CD14-positive monocyte (primary cell): ENCODE measurements at regions of chr20 and their contacts with region 1.

Region 1: GRCh38 chr20:2206957-2207769 is 88.6 kb upstream of the TGM3 start:
- DNase-seq: peak; percentile 78 to 86 (median 78)
- H3K4me3 ChIP-seq: peak overlapping the region; percentile 7 to 72 (median 48)
- H3K4me3 Mint-ChIP-seq: peak overlapping the region; percentile 74 to 84
- H3K27ac ChIP-seq: peak overlapping the region in 1 of 2 donors; percentile 37
- H3K27ac Mint-ChIP-seq: peak overlapping the region in 5 of 7 donors; percentile 67 to 78 (median 73)
- H3K4me1 ChIP-seq: peaks cover 35% of the 10 kb centered on the region in 2 donors
- H3K4me1 Mint-ChIP-seq: peaks cover 43% of the 10 kb centered on the region
- H3K27me3 ChIP-seq: peaks cover 16 to 42% of the 10 kb centered on the region in 2 donors
- H3K27me3 Mint-ChIP-seq: peaks cover 41 to 51% (median 41%) of the 10 kb centered on the region in 3 donors
- CTCF ChIP-seq: peak; percentile 95

Region 2: GRCh38 chr20:2255926-2256531 is 48.9 kb after region 1 on chr20:
- intact Hi-C with region 1: loop called (anchors 5 to 10 kb)
- DNase-seq: peak; percentile 33 to 78 (median 64)
- H3K4me3 ChIP-seq: peak overlapping the region in 1 of 3 experiments; percentile 55
- H3K4me3 Mint-ChIP-seq: peak overlapping the region in 1 of 2 donors; percentile 62
- H3K27ac ChIP-seq: peak overlapping the region; percentile 26 to 73
- H3K27ac Mint-ChIP-seq: peak overlapping the region; percentile 73 to 93 (median 85)
- H3K4me1 ChIP-seq: peaks cover 62 to 64% of the 10 kb centered on the region in 2 donors
- H3K4me1 Mint-ChIP-seq: peaks cover 58% of the 10 kb centered on the region
- H3K27me3 ChIP-seq: peaks cover 2 to 8% of the 10 kb centered on the region in 2 donors
- H3K27me3 Mint-ChIP-seq: peaks cover 8 to 14% (median 12%) of the 10 kb centered on the region in 3 donors
- CTCF ChIP-seq: no peak

Region 3: GRCh38 chr20:2349818-2350508 is 142.8 kb after region 1 on chr20:
- intact Hi-C with region 1: loop called (anchors 2 kb)
- DNase-seq: no peak
- H3K4me3 ChIP-seq: no peak overlapping the region
- H3K4me3 Mint-ChIP-seq: no peak overlapping the region
- H3K27ac ChIP-seq: no peak overlapping the region
- H3K27ac Mint-ChIP-seq: peak overlapping the region in 1 of 7 donors; percentile 30
- H3K4me1 ChIP-seq: peaks cover 0 to 9% of the 10 kb centered on the region in 2 donors
- H3K4me1 Mint-ChIP-seq: peaks cover 15% of the 10 kb centered on the region
- H3K27me3 ChIP-seq: peaks cover 8 to 21% of the 10 kb centered on the region in 2 donors
- H3K27me3 Mint-ChIP-seq: peaks cover 28 to 45% (median 40%) of the 10 kb centered on the region in 3 donors
- CTCF ChIP-seq: no peak

Region 4: DNA sequence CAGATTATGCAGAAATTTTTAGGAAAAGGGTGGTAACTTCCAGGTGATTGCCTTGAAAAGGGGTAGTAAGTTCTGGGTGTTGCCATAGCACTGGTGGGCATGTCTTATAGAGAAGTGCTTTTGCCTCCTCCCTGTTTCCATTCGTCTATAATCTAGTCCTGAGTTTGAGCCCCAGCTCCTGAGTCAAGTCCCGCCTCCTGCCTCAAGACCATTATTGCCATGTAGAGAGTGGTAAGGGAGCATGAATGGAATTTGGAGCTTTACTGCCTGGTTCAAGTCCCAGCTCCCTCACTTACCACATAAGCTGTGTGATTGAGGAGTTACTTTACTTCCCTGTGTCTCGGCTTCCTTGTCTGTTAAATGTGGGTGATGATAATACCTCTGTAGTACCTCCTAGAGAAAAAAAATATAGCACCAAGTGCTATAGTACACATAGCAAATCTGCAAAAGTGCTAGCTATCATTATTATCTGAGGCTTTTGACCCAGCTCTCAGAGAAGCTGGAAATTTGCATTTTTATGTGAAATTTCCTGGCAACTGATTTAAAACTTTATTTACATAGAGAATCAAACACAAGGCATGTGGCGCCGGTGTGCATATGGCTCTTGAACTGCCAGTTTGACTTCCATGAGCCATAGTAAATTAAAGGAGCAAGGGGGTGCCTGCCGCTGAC is 209.5 kb after region 1 on chr20:
- intact Hi-C with region 1: no loop called
- DNase-seq: no peak
- H3K4me3 ChIP-seq: no peak overlapping the region
- H3K4me3 Mint-ChIP-seq: no peak overlapping the region
- H3K27ac ChIP-seq: no peak overlapping the region
- H3K27ac Mint-ChIP-seq: no peak overlapping the region
- H3K4me1 ChIP-seq: no peaks in the 10 kb centered on the region
- H3K4me1 Mint-ChIP-seq: no peaks in the 10 kb centered on the region
- H3K27me3 ChIP-seq: peaks cover 5 to 21% of the 10 kb centered on the region in 2 donors
- H3K27me3 Mint-ChIP-seq: peaks cover 14 to 34% (median 22%) of the 10 kb centered on the region in 3 donors
- CTCF ChIP-seq: no peak

Region 5: GRCh38 chr20:2451939-2452732 is 245.0 kb after region 1 on chr20:
- intact Hi-C with region 1: loop called (anchors 2 to 5 kb)
- DNase-seq: peak; percentile 42 to 58 (median 47)
- H3K4me3 ChIP-seq: no peak overlapping the region
- H3K4me3 Mint-ChIP-seq: no peak overlapping the region
- H3K27ac ChIP-seq: no peak overlapping the region
- H3K27ac Mint-ChIP-seq: peak overlapping the region in 1 of 7 donors; percentile 1
- H3K4me1 ChIP-seq: no peaks in the 10 kb centered on the region
- H3K4me1 Mint-ChIP-seq: peaks cover 5% of the 10 kb centered on the region
- H3K27me3 ChIP-seq: peaks cover 4 to 5% of the 10 kb centered on the region in 2 donors
- H3K27me3 Mint-ChIP-seq: peaks cover 6 to 16% (median 11%) of the 10 kb centered on the region in 3 donors
- CTCF ChIP-seq: peak; percentile 86